K562 (cell line): ENCODE measurements at regions of chr4 and their contacts with region 1.

Region 1: DNA sequence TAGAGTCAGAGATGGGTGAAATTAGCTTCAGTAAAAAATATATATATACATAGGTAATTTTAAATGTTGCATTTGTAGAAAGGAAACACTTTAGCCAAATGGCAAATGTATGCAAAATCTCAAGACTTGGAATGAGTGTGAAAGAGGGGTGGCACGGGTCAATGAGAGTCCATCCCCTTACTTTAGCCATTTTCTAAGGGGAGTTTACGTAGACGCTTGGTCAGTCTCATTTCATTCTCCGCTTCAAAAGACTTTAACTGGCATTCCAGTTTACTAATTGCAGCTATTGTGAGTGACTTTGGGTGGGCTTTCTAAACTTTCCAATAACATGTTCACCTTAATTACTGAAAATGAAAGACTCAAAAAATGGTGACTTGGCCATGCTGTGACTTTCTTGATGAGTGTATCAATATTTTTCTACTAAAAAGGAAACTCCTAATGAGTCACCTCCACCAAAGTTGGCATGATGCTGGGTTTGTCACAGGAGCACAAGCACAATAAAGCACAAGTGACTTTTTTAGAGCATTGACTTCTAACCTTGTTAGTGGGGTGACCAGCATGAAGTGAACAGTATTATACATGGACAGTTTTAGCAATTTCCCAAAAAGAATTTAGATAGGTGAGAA is 356.0 kb upstream of the RASGEF1B start:
- DNase-seq: no peak
- ATAC-seq: no peak
- H3K4me3 ChIP-seq: no peak overlapping the region
- H3K27ac ChIP-seq: no peak overlapping the region
- H3K4me1 ChIP-seq: peaks cover 0 to 6% of the 10 kb centered on the region in 2 experiments; a peak in 2 of 5 replicates
- H3K27me3 ChIP-seq: no peaks in the 10 kb centered on the region
- CTCF ChIP-seq: no peak
- EP300 ChIP-seq: no peak
- POLR2A ChIP-seq: no peak
- RAD21 ChIP-seq: no peak

Region 2: DNA sequence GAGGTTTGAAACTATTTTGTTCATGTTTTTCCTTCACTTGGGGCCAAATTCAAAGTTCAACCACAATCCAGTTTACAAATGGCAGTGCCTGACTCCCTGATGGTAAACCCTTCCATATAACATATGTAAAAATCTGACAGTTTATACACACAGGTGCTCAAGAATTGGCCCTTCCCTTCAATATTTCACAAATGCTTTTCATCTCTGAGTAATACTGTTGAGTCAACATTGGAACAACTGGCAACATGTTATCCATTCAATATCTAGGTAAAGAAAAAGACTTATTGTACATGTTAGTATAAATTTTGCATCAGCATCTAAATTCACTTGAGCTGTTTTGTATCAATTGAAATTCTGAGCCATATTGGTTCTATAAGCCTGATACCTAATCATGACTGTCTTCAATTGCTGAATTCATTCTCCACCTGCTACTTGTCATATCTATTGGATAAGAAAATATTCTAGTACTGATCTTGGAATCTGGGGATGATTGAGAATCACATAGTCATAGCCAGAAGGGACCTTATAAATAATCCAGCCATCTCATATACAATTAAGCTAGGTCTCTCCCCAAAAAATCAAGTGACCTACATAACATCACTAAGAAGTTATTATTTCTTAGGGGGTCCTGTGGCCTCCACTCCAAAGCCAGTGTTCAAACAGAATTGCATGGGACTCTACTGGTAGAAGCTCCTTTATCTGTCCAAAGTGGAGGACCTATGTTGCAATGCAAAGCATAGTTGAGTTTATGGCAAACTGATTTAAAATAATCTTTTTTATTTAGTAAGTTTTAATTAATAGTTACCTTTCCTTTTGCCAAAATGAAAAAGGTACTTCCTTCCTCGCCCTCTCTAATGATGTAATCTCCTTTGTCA is 674.6 kb before region 1 on chr4:
- CTCF ChIA-PET with region 1: no interaction called
- POLR2A ChIA-PET with region 1: no interaction called
- in situ Hi-C with region 1: no loop called
- intact Hi-C with region 1: no loop called
- DNase-seq: no peak
- ATAC-seq: peak; percentile 58
- H3K4me3 ChIP-seq: no peak overlapping the region
- H3K27ac ChIP-seq: no peak overlapping the region
- H3K4me1 ChIP-seq: no peaks in the 10 kb centered on the region
- H3K27me3 ChIP-seq: no peaks in the 10 kb centered on the region
- CTCF ChIP-seq: no peak
- EP300 ChIP-seq: no peak
- POLR2A ChIP-seq: no peak
- RAD21 ChIP-seq: no peak

Region 3: GRCh38 chr4:81747242-81747930 is 80.3 kb before region 1 on chr4:
- CTCF ChIA-PET with region 1: no interaction called
- POLR2A ChIA-PET with region 1: no interaction called
- in situ Hi-C with region 1: no loop called
- intact Hi-C with region 1: loop called (anchors 5 kb)
- DNase-seq: peak; percentile 22 to 69 (median 45)
- ATAC-seq: peak; percentile 77
- H3K4me3 ChIP-seq: no peak overlapping the region
- H3K27ac ChIP-seq: peak overlapping the region; percentile 8; the same call in 1 of the 3 replicates
- H3K4me1 ChIP-seq: peaks cover 0 to 17% of the 10 kb centered on the region in 2 experiments; a peak in 3 of 5 replicates
- H3K27me3 ChIP-seq: no peaks in the 10 kb centered on the region
- CTCF ChIP-seq: no peak
- EP300 ChIP-seq: peak; percentile 54; the same call in 1 of the 2 replicates
- POLR2A ChIP-seq: no peak
- RAD21 ChIP-seq: no peak; a peak in 1 of 4 replicates

Region 4: DNA sequence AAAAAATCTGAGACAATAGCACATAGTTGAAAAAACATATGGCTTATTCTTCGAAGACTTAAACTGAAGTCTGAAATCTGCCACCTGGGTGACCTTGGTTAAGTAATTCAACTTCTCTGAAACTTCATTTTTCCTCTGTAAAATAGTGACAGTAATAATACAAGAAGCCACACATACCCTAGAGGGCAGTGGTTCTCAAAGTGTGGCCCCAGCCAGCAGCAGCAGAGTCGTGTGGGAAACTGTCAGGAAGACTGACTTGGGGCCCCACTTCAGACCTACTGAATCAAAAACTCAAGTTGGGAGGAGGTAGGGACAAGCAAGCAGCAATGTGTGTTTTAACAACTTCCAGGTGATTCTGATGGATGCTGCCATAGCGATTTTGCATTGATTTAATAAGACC is 296.2 kb after region 1 on chr4:
- CTCF ChIA-PET with region 1: no interaction called
- POLR2A ChIA-PET with region 1: no interaction called
- in situ Hi-C with region 1: no loop called
- intact Hi-C with region 1: no loop called
- DNase-seq: peak in 1 of 4 experiments; percentile 18
- ATAC-seq: peak; percentile 81
- H3K4me3 ChIP-seq: no peak overlapping the region
- H3K27ac ChIP-seq: no peak overlapping the region
- H3K4me1 ChIP-seq: peaks cover 0 to 20% of the 10 kb centered on the region in 2 experiments; a peak in 3 of 5 replicates
- H3K27me3 ChIP-seq: no peaks in the 10 kb centered on the region
- CTCF ChIP-seq: peak in 2 of 3 experiments; percentile 36 to 47; a peak in 3 of 6 replicates
- EP300 ChIP-seq: no peak
- POLR2A ChIP-seq: no peak
- RAD21 ChIP-seq: peak; percentile 45 to 54